ENCODE measurements at regions of chrX and their contacts with region 1.

Region 1: GRCh38 chrX:134969726-134970125 is 21.1 kb upstream of the SMIM10 start:
- DNase-seq: no peak
- ATAC-seq: no peak

Region 2: GRCh38 chrX:134095366-134095765 is 874.4 kb before region 1 on chrX:
- intact Hi-C with region 1: no loop called
- DNase-seq: no peak
- ATAC-seq: no peak

Region 3: DNA sequence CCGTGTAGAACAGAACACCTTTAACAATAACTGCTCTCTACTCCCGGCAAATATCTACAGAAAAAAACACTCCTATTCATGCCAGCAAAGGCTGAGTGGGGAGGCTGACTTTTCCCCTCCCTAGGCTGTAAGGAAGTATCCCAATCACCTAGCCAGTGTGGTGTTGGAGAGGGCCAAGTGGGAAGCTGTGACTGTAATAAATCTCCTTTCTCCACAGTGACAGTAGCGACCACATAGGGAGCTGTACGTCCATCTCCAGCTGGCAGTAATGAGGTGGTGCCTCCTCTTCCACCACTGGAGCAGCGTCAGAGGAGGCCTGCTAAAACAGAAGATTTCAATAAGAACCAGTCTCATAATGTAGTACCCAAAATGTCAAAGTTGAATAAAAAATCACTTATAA is 263.6 kb before region 1 on chrX:
- intact Hi-C with region 1: no loop called
- DNase-seq: no peak
- ATAC-seq: no peak

Region 4: GRCh38 chrX:134764212-134764785 is 205.4 kb before region 1 on chrX:
- intact Hi-C with region 1: no loop called
- DNase-seq: no peak
- ATAC-seq: no peak

Region 5: GRCh38 chrX:135060697-135061096 is 91.0 kb after region 1 on chrX:
- intact Hi-C with region 1: loop called (anchors 10 kb)
- DNase-seq: no peak
- ATAC-seq: no peak

Measured in Right ventricle myocardium superior (tissue), 1 donor.